ENCODE measurements at regions of chr21 and their contacts with region 1.

Region 1: GRCh38 chr21:44480200-44481053 is 25.1 kb downstream of the LRRC3 start:
- DNase-seq: no peak
- H3K4me3 ChIP-seq: no peak overlapping the region
- H3K27ac ChIP-seq: no peak overlapping the region
- H3K4me1 ChIP-seq: no peaks in the 10 kb centered on the region
- H3K27me3 ChIP-seq: no peaks in the 10 kb centered on the region
- CTCF ChIP-seq: no peak

Region 2: DNA sequence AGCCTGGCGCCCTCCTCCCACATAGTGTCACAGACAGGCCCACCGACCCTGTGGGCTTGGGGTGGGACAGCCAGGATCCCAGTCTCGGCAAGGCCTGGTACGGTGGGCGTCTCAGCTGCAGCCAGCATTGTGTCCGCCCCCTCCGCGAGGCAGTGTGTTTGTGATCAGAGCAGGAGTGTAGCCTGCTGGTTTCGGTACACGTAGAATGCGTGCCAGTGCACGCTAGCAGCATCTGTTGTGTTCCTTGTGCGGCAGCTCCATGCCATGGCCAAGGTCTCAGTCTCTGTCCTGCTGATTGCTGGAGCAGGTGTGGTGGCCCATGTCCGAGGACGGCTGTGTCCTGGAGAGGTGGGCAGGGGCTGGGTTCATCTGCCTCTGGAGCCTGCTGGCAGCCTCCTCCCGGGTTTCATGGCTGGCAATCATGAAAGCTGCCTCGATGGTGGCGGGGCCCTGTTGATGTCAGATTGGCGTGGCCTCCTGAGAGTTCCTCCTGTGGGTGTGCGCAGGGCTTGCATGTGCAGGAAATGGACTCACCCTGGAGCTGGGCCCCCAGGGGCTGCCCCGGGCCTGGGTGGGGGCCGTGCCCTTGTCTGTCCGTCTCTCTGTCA is 662.8 kb before region 1 on chr21:
- CTCF ChIA-PET with region 1: interaction called, 13 read pairs
- POLR2A ChIA-PET with region 1: no interaction called
- intact Hi-C with region 1: no loop called
- DNase-seq: no peak
- H3K4me3 ChIP-seq: no peak overlapping the region
- H3K27ac ChIP-seq: no peak overlapping the region
- H3K4me1 ChIP-seq: peaks cover under 1% of the 10 kb centered on the region
- H3K27me3 ChIP-seq: no peaks in the 10 kb centered on the region
- CTCF ChIP-seq: no peak

Region 3: DNA sequence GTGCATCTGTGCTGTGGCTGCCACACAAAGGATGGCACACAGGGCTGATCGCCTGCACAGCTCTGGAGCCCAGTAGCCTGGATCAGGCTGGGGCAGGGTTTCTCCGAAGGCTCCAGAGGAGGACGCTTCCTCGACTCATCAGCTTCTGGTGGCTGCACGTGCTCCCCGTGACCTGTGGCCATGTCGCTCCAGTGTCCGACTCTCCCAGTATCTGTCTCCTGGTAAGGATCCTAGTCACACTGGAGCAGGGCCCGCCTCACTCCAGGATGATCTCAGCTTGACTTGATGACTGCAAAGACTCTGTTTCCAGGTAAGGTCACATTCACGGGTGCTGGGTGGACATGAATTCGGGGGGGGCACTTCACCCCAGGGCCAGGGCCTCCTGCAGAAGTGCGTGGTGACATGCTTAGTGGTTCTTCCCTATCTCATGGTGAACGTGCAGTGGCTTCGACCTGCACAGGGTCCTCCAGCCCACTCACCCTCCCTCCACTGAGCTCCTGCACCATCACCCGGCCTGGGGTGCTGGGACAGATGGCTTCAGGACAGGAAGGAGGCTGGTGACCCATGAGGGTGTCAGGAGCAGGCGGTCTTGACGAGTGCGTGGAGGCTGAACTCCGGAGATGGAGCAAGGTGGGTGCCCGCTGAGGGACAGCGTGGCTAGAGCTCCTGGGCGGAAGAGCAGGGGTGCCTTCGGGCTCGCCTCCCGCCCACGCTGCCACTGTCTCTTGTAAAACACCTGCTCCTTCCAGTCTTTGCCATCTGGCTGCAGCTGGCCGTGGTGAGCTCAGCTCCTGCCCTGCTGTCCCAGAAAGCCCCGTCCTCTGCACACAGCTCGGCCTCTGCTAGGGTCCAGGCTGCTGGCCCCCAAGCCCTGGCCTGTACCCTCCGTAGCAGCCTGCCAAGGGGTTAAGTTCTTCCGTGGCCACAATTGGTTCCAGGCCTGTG is 51.1 kb after region 1 on chr21:
- CTCF ChIA-PET with region 1: no interaction called
- POLR2A ChIA-PET with region 1: no interaction called
- intact Hi-C with region 1: no loop called
- DNase-seq: no peak
- H3K4me3 ChIP-seq: no peak overlapping the region
- H3K27ac ChIP-seq: no peak overlapping the region
- H3K4me1 ChIP-seq: no peaks in the 10 kb centered on the region
- H3K27me3 ChIP-seq: no peaks in the 10 kb centered on the region
- CTCF ChIP-seq: no peak

Measured in A673 (cell line).